MCF 10A (cell line): ENCODE measurements at regions of chr5 and their contacts with region 1.

Region 1: GRCh38 chr5:174355208-174355612 is 309.7 kb downstream of the NSG2 start:
- DNase-seq: peak; percentile 85
- H3K4me3 Mint-ChIP-seq: no peak overlapping the region
- H3K27ac Mint-ChIP-seq: no peak overlapping the region
- H3K4me1 Mint-ChIP-seq: peaks cover 10% of the 10 kb centered on the region
- H3K27me3 Mint-ChIP-seq: peaks cover 14% of the 10 kb centered on the region
- CTCF ChIP-seq: no peak

Region 2: DNA sequence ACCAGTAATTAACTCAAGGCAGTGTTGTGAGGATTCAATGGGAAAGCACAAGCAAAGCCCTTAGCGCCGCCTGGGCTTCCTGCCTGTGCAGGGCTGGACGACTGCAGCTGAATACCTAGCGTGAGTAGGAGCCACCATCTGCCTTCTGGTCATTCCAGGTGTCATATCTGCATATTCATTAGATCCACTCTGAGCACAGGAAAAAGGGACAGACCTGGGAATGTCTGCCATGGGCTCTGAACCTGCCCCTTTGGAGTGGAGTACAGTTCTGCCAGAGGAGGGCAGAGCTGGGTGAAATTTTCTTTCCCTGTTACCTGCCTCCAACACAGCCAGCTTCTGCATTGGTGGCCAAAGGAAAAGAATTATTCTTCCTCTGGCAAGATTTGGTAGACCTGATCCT is 10.9 kb before region 1 on chr5:
- CTCF ChIA-PET with region 1: interaction called, 10 read pairs
- POLR2A ChIA-PET with region 1: interaction called, 10 read pairs
- intact Hi-C with region 1: no loop called
- DNase-seq: no peak
- H3K4me3 Mint-ChIP-seq: no peak overlapping the region
- H3K27ac Mint-ChIP-seq: no peak overlapping the region
- H3K4me1 Mint-ChIP-seq: no peaks in the 10 kb centered on the region
- H3K27me3 Mint-ChIP-seq: peaks cover 11% of the 10 kb centered on the region
- CTCF ChIP-seq: no peak

Region 3: GRCh38 chr5:174837919-174838902 is 483.0 kb after region 1 on chr5:
- CTCF ChIA-PET with region 1: no interaction called
- POLR2A ChIA-PET with region 1: no interaction called
- intact Hi-C with region 1: loop called (anchors 1 kb)
- DNase-seq: peak; percentile 99
- H3K4me3 Mint-ChIP-seq: no peak overlapping the region
- H3K27ac Mint-ChIP-seq: peak overlapping the region; percentile 65
- H3K4me1 Mint-ChIP-seq: peaks cover 20% of the 10 kb centered on the region
- H3K27me3 Mint-ChIP-seq: no peaks in the 10 kb centered on the region
- CTCF ChIP-seq: peak; percentile 43